ENCODE measurements at regions of chr5 and their contacts with region 1.

Region 1: DNA sequence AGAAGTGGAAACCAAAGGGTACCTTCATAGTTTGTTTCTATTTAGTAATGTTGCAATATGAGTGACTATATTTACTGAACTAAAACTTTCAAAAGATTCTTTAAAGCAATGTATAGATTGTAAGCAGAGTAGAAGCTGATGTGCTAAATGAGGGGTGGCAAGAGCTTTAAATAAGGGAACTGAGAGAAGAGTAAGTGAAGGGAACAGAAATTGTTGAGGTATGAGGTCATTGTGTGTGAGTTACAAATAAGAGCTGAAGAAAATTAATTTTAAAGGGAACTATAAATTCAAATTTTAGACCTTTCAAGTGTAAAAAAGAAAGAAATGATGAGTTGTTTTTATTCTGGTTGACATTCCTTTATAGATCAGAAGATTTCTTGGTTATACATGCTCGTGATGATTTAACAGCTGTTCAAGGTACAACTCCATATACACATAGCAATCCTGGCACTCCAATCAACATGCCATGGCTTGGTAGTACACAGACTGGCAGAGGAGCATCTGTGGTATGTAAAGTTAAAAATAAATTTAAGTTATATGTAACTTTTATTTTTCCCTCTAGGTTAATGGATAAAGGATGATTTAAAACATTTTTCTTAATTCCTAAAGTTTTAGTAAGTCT is 135.1 kb upstream of the TNFAIP8 start:
- DNase-seq: no peak
- H3K4me3 ChIP-seq: no peak overlapping the region
- H3K27ac ChIP-seq: no peak overlapping the region
- H3K4me1 ChIP-seq: peaks cover 0 to 13% (median 11%) of the 10 kb centered on the region in 4 donors
- H3K27me3 ChIP-seq: no peaks in the 10 kb centered on the region
- CTCF ChIP-seq: no peak
- EP300 ChIP-seq: no peak
- POLR2A ChIP-seq: no peak

Region 2: GRCh38 chr5:118565335-118565971 is 655.2 kb before region 1 on chr5:
- in situ Hi-C with region 1: no loop called
- intact Hi-C with region 1: loop called (anchors 5 kb)
- DNase-seq: no peak
- H3K4me3 ChIP-seq: no peak overlapping the region
- H3K27ac ChIP-seq: no peak overlapping the region
- H3K4me1 ChIP-seq: no peaks in the 10 kb centered on the region
- H3K27me3 ChIP-seq: no peaks in the 10 kb centered on the region
- CTCF ChIP-seq: no peak
- EP300 ChIP-seq: no peak
- POLR2A ChIP-seq: no peak

Region 3: DNA sequence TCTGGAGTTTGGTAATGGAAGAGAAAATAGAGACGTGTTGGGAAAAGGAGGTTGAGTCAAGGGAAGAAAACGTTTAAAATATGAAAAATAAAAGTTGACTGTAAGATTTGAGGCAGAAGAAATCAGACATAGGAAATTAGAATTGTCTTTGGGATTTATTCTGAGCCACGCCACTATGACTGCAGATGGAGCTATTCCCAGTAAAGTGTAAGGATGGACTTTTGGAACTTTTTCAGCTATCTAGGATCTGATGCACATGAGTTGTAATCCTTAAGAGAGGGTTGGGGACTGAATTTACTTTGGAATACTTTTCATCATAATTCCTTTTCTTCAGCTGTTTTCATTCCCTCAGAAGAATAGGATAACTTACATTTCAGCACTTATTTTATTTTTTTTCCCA is 745.3 kb after region 1 on chr5:
- in situ Hi-C with region 1: no loop called
- intact Hi-C with region 1: no loop called
- DNase-seq: no peak
- H3K4me3 ChIP-seq: no peak overlapping the region
- H3K27ac ChIP-seq: no peak overlapping the region
- H3K4me1 ChIP-seq: no peaks in the 10 kb centered on the region
- H3K27me3 ChIP-seq: no peaks in the 10 kb centered on the region
- CTCF ChIP-seq: no peak
- EP300 ChIP-seq: no peak
- POLR2A ChIP-seq: no peak

Measured in transverse colon (tissue), 4 donors.